ENCODE measurements at regions of chr21 and their contacts with region 1.

Region 1: DNA sequence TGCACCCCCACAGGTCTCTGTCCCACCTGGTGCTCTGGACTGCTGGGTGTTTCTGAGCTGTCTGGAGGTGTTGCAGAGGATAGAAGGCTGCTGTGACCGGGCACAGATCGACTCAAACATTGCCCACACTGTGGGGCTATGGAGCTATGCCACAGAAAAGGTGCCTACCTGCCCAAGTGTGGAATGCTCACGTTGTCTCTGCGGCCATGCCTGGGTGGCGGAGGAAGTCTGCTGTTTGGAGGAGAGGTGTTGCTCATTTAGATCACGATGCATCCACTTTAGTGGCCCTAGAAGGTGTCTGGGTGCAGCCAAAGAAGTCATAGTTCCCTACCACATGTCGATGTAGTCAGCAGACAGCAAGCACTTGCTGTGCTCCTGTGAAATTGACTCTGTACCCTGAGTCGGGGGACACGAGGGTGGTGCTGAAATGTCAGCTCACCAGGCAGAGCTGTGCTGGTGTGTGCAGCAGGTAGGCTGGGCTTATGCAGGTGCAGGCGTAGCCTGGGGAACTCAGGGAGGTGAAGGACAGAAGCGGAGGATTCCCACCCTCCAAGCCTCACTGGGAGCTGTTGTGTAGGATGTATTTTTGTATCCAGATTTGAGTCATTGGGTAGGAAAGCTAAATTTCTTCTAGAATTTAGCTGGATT is 32.8 kb upstream of the PWP2 start:
- DNase-seq: no peak
- H3K4me3 ChIP-seq: no peak overlapping the region
- H3K4me3 Mint-ChIP-seq: peak overlapping the region in 1 of 8 donors; percentile 17
- H3K27ac ChIP-seq: no peak overlapping the region
- H3K27ac Mint-ChIP-seq: peak overlapping the region in 6 of 7 donors; percentile 19 to 83 (median 70)
- H3K4me1 ChIP-seq: peaks cover 16% of the 10 kb centered on the region
- H3K4me1 Mint-ChIP-seq: peaks cover 26 to 35% (median 31%) of the 10 kb centered on the region in 4 donors
- H3K27me3 ChIP-seq: no peaks in the 10 kb centered on the region
- H3K27me3 Mint-ChIP-seq: no peaks in the 10 kb centered on the region

Region 2: DNA sequence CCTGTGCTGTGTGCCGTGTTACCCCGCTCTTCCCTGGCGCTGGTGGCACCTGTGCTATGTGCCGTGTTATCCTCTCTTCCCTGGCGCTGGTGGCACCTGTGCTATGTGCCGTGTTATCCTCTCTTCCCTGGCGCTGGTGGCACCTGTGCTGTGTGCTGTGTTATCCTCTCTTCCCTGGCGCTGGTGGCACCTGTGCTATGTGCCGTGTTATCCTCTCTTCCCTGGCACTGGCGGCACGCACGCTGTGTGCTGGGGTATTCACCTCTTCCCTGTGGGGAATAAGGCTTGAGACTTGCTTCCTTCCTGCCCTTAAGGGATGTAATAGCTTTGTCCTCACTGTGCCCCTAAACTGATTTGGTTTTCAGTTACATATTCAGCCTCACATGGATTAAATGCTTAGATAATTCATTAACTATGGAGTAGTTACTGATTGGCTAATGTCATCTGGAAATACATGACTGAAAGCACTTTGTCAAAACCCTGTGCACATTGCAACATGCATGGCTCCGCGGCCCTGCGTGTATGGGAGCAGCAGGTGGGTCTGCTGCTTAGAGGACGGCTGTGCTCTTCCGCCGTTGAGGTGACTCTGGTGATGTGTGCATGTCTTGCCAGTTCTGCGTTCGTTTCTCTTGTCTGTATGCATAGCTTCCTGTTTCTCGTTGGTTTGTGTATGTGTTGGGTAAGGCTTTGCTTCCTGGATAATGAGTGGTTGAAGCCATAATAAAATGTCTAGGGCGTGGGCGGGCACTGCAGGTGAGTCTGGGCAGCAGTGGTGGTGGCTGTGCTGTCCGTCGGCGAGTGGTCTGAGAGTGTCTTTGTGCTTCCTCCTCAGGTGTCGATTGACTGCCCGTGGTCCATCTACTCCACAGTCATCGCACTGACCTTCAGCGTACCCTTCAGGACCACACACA is 14.8 kb after region 1 on chr21:
- CTCF ChIA-PET with region 1: interaction called, 9 read pairs
- POLR2A ChIA-PET with region 1: interaction called, 25 read pairs
- intact Hi-C with region 1: no loop called
- DNase-seq: peak; percentile 71 to 77 (median 72)
- H3K4me3 ChIP-seq: peak overlapping the region in 1 of 2 donors; percentile 39
- H3K4me3 Mint-ChIP-seq: peak overlapping the region; percentile 58 to 85 (median 70)
- H3K27ac ChIP-seq: peak overlapping the region; percentile 71
- H3K27ac Mint-ChIP-seq: peak overlapping the region; percentile 89 to 98 (median 95)
- H3K4me1 ChIP-seq: peaks cover 73% of the 10 kb centered on the region
- H3K4me1 Mint-ChIP-seq: peaks cover 50 to 78% (median 69%) of the 10 kb centered on the region in 4 donors
- H3K27me3 ChIP-seq: no peaks in the 10 kb centered on the region
- H3K27me3 Mint-ChIP-seq: no peaks in the 10 kb centered on the region

Measured in CD4-positive, alpha-beta memory T cell (primary cell).